AG04450 (cell line): ENCODE measurements at regions of chr21 and their contacts with region 1.

Region 1: DNA sequence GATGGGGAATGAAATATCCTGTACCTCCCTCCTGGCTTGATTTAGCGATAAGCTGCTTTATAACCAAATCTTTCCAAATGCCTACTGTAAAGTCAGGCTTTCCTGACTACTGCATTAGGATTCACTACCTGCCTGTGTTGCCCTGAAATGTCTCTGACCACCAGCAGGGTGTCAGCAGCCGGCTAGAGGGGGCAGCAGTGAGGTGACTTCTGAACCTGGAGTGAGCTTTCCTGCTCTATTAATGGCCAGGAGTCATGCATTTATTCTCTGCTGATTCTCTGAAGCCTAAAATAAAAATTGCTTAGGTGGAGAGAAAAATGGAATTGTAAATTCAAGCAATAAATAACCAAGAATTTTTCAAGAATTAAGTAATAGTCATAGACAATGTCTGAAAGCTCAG is 2.5 kb downstream of the BACE2 start:
- DNase-seq: no peak
- H3K4me3 ChIP-seq: no peak overlapping the region
- H3K27ac ChIP-seq: no peak overlapping the region
- H3K27me3 ChIP-seq: peaks cover 4% of the 10 kb centered on the region
- CTCF ChIP-seq: peak; percentile 80

Region 2: GRCh38 chr21:41183575-41183974 is 13.1 kb after region 1 on chr21:
- CTCF ChIA-PET with region 1: interaction called, 15 read pairs
- POLR2A ChIA-PET with region 1: no interaction called
- DNase-seq: no peak
- H3K4me3 ChIP-seq: no peak overlapping the region
- H3K27ac ChIP-seq: no peak overlapping the region
- H3K27me3 ChIP-seq: no peaks in the 10 kb centered on the region
- CTCF ChIP-seq: no peak